Naive thymus-derived CD4-positive, alpha-beta T cell (primary cell): ENCODE measurements at regions of chr5 and their contacts with region 1.

Region 1: GRCh38 chr5:42767491-42768105 is 11.0 kb downstream of the CCDC152 start:
- DNase-seq: peak in 4 of 9 donors; percentile 2 to 16 (median 10)
- ATAC-seq: no peak
- H3K4me3 ChIP-seq: no peak overlapping the region
- H3K4me3 Mint-ChIP-seq: no peak overlapping the region
- H3K27ac ChIP-seq: no peak overlapping the region
- H3K27ac Mint-ChIP-seq: no peak overlapping the region
- H3K4me1 ChIP-seq: no peaks in the 10 kb centered on the region
- H3K4me1 Mint-ChIP-seq: no peaks in the 10 kb centered on the region
- H3K27me3 ChIP-seq: no peaks in the 10 kb centered on the region
- H3K27me3 Mint-ChIP-seq: peaks cover 4 to 29% (median 7%) of the 10 kb centered on the region in 5 donors

Region 2: GRCh38 chr5:41856644-41857491 is 910.7 kb before region 1 on chr5:
- CTCF ChIA-PET with region 1: no interaction called
- POLR2A ChIA-PET with region 1: no interaction called
- intact Hi-C with region 1: loop called (anchors 1 kb)
- DNase-seq: peak in 8 of 9 donors; percentile 34 to 77 (median 71)
- ATAC-seq: peak; percentile 93
- H3K4me3 ChIP-seq: no peak overlapping the region
- H3K4me3 Mint-ChIP-seq: no peak overlapping the region
- H3K27ac ChIP-seq: peak overlapping the region; percentile 1
- H3K27ac Mint-ChIP-seq: no peak overlapping the region
- H3K4me1 ChIP-seq: no peaks in the 10 kb centered on the region
- H3K4me1 Mint-ChIP-seq: peaks cover under 1 to 13% (median 7%) of the 10 kb centered on the region in 7 donors
- H3K27me3 ChIP-seq: no peaks in the 10 kb centered on the region
- H3K27me3 Mint-ChIP-seq: no peaks in the 10 kb centered on the region

Region 3: DNA sequence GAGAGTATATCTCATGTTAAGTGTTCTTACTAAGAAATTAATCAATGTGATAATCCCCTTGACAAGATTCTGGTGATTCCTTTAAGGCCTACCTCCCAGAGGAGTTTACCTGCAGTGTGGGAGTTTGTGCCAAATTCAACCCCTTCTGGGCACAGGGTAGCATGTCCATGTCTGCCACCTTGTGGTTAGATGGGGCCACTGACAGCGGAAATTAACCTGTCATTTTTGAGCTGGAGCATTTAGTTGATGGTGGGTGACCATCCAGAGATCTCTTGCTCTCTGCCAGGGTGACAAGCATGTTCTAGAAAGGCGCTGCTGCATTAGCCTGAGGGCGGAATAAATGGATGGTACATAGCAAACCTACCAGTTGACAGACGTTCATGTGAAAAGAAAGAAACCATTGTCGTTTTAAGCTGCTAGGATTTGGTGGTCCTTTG is 710.3 kb before region 1 on chr5:
- CTCF ChIA-PET with region 1: no interaction called
- POLR2A ChIA-PET with region 1: no interaction called
- intact Hi-C with region 1: loop called in 1 of 2 experiments (anchors 5 kb)
- DNase-seq: peak in 8 of 9 donors; percentile 25 to 58 (median 51)
- ATAC-seq: peak; percentile 87
- H3K4me3 ChIP-seq: no peak overlapping the region
- H3K4me3 Mint-ChIP-seq: no peak overlapping the region
- H3K27ac ChIP-seq: no peak overlapping the region
- H3K27ac Mint-ChIP-seq: no peak overlapping the region
- H3K4me1 ChIP-seq: no peaks in the 10 kb centered on the region
- H3K4me1 Mint-ChIP-seq: peaks cover 0 to 4% (median 0%) of the 10 kb centered on the region in 7 donors
- H3K27me3 ChIP-seq: no peaks in the 10 kb centered on the region
- H3K27me3 Mint-ChIP-seq: peaks cover 0 to 12% (median 5%) of the 10 kb centered on the region in 5 donors

Region 4: GRCh38 chr5:42514754-42515153 is 252.8 kb before region 1 on chr5:
- CTCF ChIA-PET with region 1: no interaction called
- POLR2A ChIA-PET with region 1: no interaction called
- intact Hi-C with region 1: loop called (anchors 2 to 10 kb)
- DNase-seq: no peak
- ATAC-seq: no peak
- H3K4me3 ChIP-seq: no peak overlapping the region
- H3K4me3 Mint-ChIP-seq: no peak overlapping the region
- H3K27ac ChIP-seq: no peak overlapping the region
- H3K27ac Mint-ChIP-seq: no peak overlapping the region
- H3K4me1 ChIP-seq: no peaks in the 10 kb centered on the region
- H3K4me1 Mint-ChIP-seq: peaks cover 0 to 2% (median 0%) of the 10 kb centered on the region in 7 donors
- H3K27me3 ChIP-seq: no peaks in the 10 kb centered on the region
- H3K27me3 Mint-ChIP-seq: peaks cover 0 to 8% (median 5%) of the 10 kb centered on the region in 5 donors

Region 5: GRCh38 chr5:42621242-42621641 is 146.4 kb before region 1 on chr5:
- CTCF ChIA-PET with region 1: no interaction called
- POLR2A ChIA-PET with region 1: no interaction called
- intact Hi-C with region 1: loop called in 1 of 2 experiments (anchors 5 kb)
- DNase-seq: no peak
- ATAC-seq: peak; percentile 22
- H3K4me3 ChIP-seq: no peak overlapping the region
- H3K4me3 Mint-ChIP-seq: no peak overlapping the region
- H3K27ac ChIP-seq: no peak overlapping the region
- H3K27ac Mint-ChIP-seq: no peak overlapping the region
- H3K4me1 ChIP-seq: no peaks in the 10 kb centered on the region
- H3K4me1 Mint-ChIP-seq: no peaks in the 10 kb centered on the region
- H3K27me3 ChIP-seq: no peaks in the 10 kb centered on the region
- H3K27me3 Mint-ChIP-seq: peaks cover 3 to 10% (median 6%) of the 10 kb centered on the region in 5 donors